CD8-positive, alpha-beta T cell (primary cell): ENCODE measurements at regions of chr6 and their contacts with region 1.

Region 1: DNA sequence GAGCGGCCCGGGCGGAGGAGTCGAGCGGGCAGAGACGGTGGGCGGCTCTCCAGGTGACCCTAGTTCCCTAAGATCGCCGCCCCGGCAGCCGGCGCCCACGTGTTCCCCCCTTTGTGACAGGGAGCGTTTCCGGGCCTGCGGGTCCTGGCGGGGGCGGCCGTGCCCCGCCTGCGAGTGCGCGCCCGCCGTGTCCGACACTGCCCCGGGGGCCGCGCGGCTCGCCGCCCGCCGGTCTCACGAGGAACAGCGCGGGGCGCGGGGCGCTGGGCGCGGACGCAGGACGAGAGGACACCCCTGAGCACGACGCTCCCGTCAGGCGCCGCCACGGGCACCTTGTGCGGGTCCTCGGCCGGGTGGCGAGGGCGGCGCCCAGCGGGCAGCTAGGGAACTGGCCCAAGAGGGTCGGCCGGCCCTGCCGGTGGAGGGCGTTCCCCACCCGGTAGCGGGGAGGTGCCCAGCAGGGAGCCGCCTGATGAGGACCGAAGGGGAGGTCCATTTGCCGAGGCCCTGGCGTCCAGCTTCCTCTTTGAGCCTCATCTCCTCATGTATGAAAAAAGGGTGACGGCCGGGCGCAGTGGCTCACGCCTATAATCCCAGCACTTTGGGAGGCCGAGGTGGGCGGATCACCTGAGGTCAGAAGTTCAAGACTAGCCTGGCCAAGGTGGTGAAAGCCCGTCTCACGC is at the start of gene VARS1:
- DNase-seq: peak; percentile 68 to 93 (median 83)
- ATAC-seq: peak; percentile 88
- H3K4me3 ChIP-seq: peak within 1 kb of the TSS; percentile 63 to 93
- H3K4me3 Mint-ChIP-seq: peak within 1 kb of the TSS; percentile 94
- H3K27ac ChIP-seq: peak within 1 kb of the TSS; percentile 74 to 83
- H3K27ac Mint-ChIP-seq: peak within 1 kb of the TSS; percentile 98
- H3K4me1 ChIP-seq: peaks cover 44% of the 10 kb centered on the region
- H3K4me1 Mint-ChIP-seq: peaks cover 44% of the 10 kb centered on the region
- H3K27me3 ChIP-seq: no peaks in the 10 kb centered on the region
- H3K27me3 Mint-ChIP-seq: no peaks in the 10 kb centered on the region
- CTCF ChIP-seq: peak; percentile 70
- total RNA-seq, gene VARS1: 29.8 to 33.3 TPM

Region 2: GRCh38 chr6:31645325-31645724 is 150.4 kb before region 1 on chr6:
- CTCF ChIA-PET with region 1: no interaction called
- POLR2A ChIA-PET with region 1: no interaction called
- intact Hi-C with region 1: no loop called
- DNase-seq: no peak
- ATAC-seq: no peak
- H3K4me3 ChIP-seq: no peak overlapping the region
- H3K4me3 Mint-ChIP-seq: no peak overlapping the region
- H3K27ac ChIP-seq: no peak overlapping the region
- H3K27ac Mint-ChIP-seq: peak overlapping the region; percentile 75
- H3K4me1 ChIP-seq: no peaks in the 10 kb centered on the region
- H3K4me1 Mint-ChIP-seq: peaks cover 16% of the 10 kb centered on the region
- H3K27me3 ChIP-seq: no peaks in the 10 kb centered on the region
- H3K27me3 Mint-ChIP-seq: no peaks in the 10 kb centered on the region
- CTCF ChIP-seq: no peak

Region 3: GRCh38 chr6:31806465-31807272 is 10.9 kb after region 1 on chr6 and contains the start of gene LSM2:
- CTCF ChIA-PET with region 1: interaction called, 6 read pairs
- POLR2A ChIA-PET with region 1: interaction called, 33 read pairs
- intact Hi-C with region 1: loop called (anchors 1 kb)
- DNase-seq: peak; percentile 92 to 99 (median 97)
- ATAC-seq: peak; percentile 99
- H3K4me3 ChIP-seq: peak within 1 kb of the TSS; percentile 61 to 95
- H3K4me3 Mint-ChIP-seq: peak within 1 kb of the TSS; percentile 87
- H3K27ac ChIP-seq: peak within 1 kb of the TSS; percentile 78 to 82
- H3K27ac Mint-ChIP-seq: peak within 1 kb of the TSS; percentile 94
- H3K4me1 ChIP-seq: peaks cover 8% of the 10 kb centered on the region
- H3K4me1 Mint-ChIP-seq: peaks cover 25% of the 10 kb centered on the region
- H3K27me3 ChIP-seq: no peaks in the 10 kb centered on the region
- H3K27me3 Mint-ChIP-seq: no peaks in the 10 kb centered on the region
- CTCF ChIP-seq: no peak
- total RNA-seq, gene LSM2: 19.6 to 26.4 TPM

Region 4: DNA sequence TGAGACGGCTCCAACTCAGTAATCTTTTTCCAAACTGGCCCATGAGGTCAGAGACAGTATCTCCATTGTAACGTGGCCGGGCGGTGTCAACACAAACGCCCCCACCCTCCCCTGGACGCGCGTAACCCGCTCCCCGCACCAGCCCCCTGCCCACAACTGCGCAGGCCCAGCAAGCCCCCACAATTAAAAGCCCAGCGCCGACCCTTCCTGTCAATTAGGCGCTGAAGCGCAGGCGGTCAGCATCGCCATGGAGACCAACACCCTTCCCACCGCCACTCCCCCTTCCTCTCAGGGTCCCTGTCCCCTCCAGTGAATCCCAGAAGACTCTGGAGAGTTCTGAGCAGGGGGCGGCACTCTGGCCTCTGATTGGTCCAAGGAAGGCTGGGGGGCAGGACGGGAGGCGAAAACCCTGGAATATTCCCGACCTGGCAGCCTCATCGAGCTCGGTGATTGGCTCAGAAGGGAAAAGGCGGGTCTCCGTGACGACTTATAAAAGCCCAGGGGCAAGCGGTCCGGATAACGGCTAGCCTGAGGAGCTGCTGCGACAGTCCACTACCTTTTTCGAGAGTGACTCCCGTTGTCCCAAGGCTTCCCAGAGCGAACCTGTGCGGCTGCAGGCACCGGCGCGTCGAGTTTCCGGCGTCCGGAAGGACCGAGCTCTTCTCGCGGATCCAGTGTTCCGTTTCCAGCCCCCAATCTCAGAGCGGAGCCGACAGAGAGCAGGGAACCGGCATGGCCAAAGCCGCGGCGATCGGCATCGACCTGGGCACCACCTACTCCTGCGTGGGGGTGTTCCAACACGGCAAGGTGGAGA is 19.5 kb after region 1 on chr6 and contains the starts of genes HSPA1A and HSPA1L:
- CTCF ChIA-PET with region 1: interaction called, 3 read pairs
- POLR2A ChIA-PET with region 1: interaction called, 7 read pairs
- intact Hi-C with region 1: loop called in 1 of 2 experiments (anchors 2 kb)
- DNase-seq: peak in 7 of 9 experiments; percentile 41 to 75 (median 63)
- ATAC-seq: peak; percentile 13
- H3K4me3 ChIP-seq: peak within 1 kb of the TSS; percentile 74 to 96
- H3K4me3 Mint-ChIP-seq: peak within 1 kb of the TSS; percentile 93
- H3K27ac ChIP-seq: peak within 1 kb of the TSS; percentile 58 to 82
- H3K27ac Mint-ChIP-seq: peak within 1 kb of the TSS; percentile 83
- H3K4me1 ChIP-seq: peaks cover 16% of the 10 kb centered on the region
- H3K4me1 Mint-ChIP-seq: peaks cover 36% of the 10 kb centered on the region
- H3K27me3 ChIP-seq: no peaks in the 10 kb centered on the region
- H3K27me3 Mint-ChIP-seq: no peaks in the 10 kb centered on the region
- CTCF ChIP-seq: no peak
- total RNA-seq, gene HSPA1A: 2.1 to 2.2 TPM
- total RNA-seq, gene HSPA1L: 1.2 TPM

Region 5: DNA sequence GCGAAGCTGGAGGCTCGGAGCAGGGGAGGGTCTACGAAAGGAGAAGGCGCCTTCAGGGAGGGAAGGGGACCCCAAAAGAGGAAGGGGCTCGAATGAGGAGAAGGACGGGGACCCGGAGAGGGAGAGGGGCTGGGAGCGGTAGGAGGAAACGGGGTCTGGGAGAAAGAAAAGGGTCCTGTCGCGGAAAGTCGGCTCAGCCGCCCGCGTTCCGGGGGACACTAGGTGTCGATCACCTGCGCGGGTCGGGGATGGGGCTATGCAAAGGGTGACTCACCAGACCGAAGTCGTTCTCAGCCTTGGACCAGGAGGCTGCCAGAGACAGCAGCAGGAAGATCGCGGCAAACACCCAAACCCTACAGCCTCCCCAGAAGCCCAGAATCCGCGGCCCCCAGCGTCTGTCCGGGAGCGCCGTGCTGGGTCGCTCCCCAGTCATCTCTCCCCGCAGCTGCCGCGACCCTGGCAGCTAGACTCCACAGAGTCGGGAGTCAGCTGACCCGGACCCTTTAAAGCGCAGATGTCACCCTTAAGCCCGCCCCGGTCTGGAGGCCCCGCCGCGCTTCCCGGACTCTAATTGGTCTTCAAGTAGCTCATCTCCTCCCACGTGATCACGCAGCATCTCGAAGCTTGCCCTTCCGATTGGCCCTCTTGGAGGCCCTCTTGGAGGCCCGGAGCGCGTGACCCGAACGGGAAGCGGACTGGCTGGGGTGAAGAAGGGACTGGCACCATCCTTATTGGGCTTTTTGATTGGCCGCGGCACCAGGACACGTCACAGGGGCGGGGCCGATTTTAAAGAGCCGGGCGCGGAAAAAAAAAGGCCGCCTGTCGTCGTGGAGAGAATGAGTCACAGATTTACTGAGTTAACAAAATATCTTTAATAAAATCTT is 66.8 kb after region 1 on chr6 and contains the start of gene NEU1:
- CTCF ChIA-PET with region 1: no interaction called
- POLR2A ChIA-PET with region 1: no interaction called
- intact Hi-C with region 1: loop called (anchors 1 kb)
- DNase-seq: peak; percentile 97 to 100 (median 98)
- ATAC-seq: peak; percentile 91
- H3K4me3 ChIP-seq: peak within 1 kb of the TSS; percentile 75 to 94
- H3K4me3 Mint-ChIP-seq: peak within 1 kb of the TSS; percentile 95
- H3K27ac ChIP-seq: peak within 1 kb of the TSS; percentile 77 to 97
- H3K27ac Mint-ChIP-seq: peak within 1 kb of the TSS; percentile 98
- H3K4me1 ChIP-seq: peaks cover 17% of the 10 kb centered on the region
- H3K4me1 Mint-ChIP-seq: peaks cover 23% of the 10 kb centered on the region
- H3K27me3 ChIP-seq: no peaks in the 10 kb centered on the region
- H3K27me3 Mint-ChIP-seq: no peaks in the 10 kb centered on the region
- CTCF ChIP-seq: no peak
- total RNA-seq, gene NEU1: 30.0 to 30.2 TPM